ENCODE measurements at regions of chr13 and their contacts with region 1.

Region 1: GRCh38 chr13:21476893-21477472 is 17.9 kb upstream of the ZDHHC20 start:
- DNase-seq: peak; percentile 59 to 82 (median 65)
- ATAC-seq: peak; percentile 94
- H3K4me3 ChIP-seq: peak overlapping the region; percentile 50
- H3K4me3 Mint-ChIP-seq: peak overlapping the region; percentile 74 to 87 (median 82)
- H3K27ac ChIP-seq: peak overlapping the region; percentile 24
- H3K27ac Mint-ChIP-seq: peak overlapping the region in 8 of 9 donors; percentile 22 to 86 (median 58)
- H3K4me1 ChIP-seq: no peaks in the 10 kb centered on the region
- H3K4me1 Mint-ChIP-seq: peaks cover 7 to 17% (median 11%) of the 10 kb centered on the region in 7 donors
- H3K27me3 ChIP-seq: no peaks in the 10 kb centered on the region
- H3K27me3 Mint-ChIP-seq: peaks cover 0 to 5% (median 0%) of the 10 kb centered on the region in 5 donors

Region 2: DNA sequence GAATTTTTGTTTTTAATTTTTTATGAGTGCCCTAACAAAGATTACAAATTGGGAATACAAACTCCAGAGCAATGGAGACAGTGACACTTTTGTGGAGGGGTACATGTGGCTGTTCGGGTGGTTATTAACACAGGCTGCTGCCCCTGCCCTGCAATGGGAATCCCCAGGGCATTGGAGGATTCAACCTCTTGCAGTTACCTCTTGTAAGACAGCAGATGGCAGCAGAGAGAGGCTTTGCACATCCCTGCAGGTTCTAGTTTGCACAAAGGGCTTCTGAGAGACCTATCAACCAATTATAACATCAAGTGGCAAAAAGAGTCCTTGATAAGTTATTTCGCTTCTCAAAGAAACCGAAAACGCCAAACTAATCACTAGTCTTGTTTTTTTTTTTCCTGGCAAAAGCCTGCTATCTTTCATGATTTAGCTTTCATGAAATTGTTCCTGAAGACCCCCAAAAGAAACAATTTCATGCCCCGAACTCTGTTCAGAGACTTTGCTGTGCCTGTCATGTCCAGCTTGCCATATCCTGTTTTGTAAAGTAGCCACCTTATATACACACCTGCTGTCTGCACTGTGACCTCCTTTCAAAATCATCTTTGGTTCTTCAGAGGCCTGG is 1294.6 kb before region 1 on chr13:
- CTCF ChIA-PET with region 1: no interaction called
- POLR2A ChIA-PET with region 1: no interaction called
- intact Hi-C with region 1: loop called in 1 of 2 experiments (anchors 5 kb)
- DNase-seq: peak in 7 of 9 donors; percentile 43 to 77 (median 67)
- ATAC-seq: peak; percentile 99
- H3K4me3 ChIP-seq: no peak overlapping the region
- H3K4me3 Mint-ChIP-seq: no peak overlapping the region
- H3K27ac ChIP-seq: no peak overlapping the region
- H3K27ac Mint-ChIP-seq: no peak overlapping the region
- H3K4me1 ChIP-seq: no peaks in the 10 kb centered on the region
- H3K4me1 Mint-ChIP-seq: no peaks in the 10 kb centered on the region
- H3K27me3 ChIP-seq: peaks cover 0 to 10% of the 10 kb centered on the region in 2 donors
- H3K27me3 Mint-ChIP-seq: peaks cover 37 to 48% (median 43%) of the 10 kb centered on the region in 5 donors

Region 3: GRCh38 chr13:20828539-20829364 is 648.2 kb before region 1 on chr13:
- CTCF ChIA-PET with region 1: no interaction called
- POLR2A ChIA-PET with region 1: interaction called, 3 read pairs
- intact Hi-C with region 1: loop called in 1 of 2 experiments (anchors 10 kb)
- DNase-seq: peak in 7 of 9 donors; percentile 46 to 75 (median 67)
- ATAC-seq: peak; percentile 93
- H3K4me3 ChIP-seq: no peak overlapping the region
- H3K4me3 Mint-ChIP-seq: peak overlapping the region in 8 of 10 donors; percentile 51 to 81 (median 73)
- H3K27ac ChIP-seq: peak overlapping the region; percentile 14
- H3K27ac Mint-ChIP-seq: peak overlapping the region; percentile 35 to 87 (median 77)
- H3K4me1 ChIP-seq: no peaks in the 10 kb centered on the region
- H3K4me1 Mint-ChIP-seq: peaks cover 7 to 15% (median 10%) of the 10 kb centered on the region in 7 donors
- H3K27me3 ChIP-seq: no peaks in the 10 kb centered on the region
- H3K27me3 Mint-ChIP-seq: no peaks in the 10 kb centered on the region

Region 4: GRCh38 chr13:21106089-21106488 is 370.9 kb before region 1 on chr13:
- CTCF ChIA-PET with region 1: interaction called, 8 read pairs
- POLR2A ChIA-PET with region 1: interaction called, 3 read pairs
- intact Hi-C with region 1: loop called (anchors 1 kb)
- DNase-seq: no peak
- ATAC-seq: no peak
- H3K4me3 ChIP-seq: no peak overlapping the region
- H3K4me3 Mint-ChIP-seq: no peak overlapping the region
- H3K27ac ChIP-seq: no peak overlapping the region
- H3K27ac Mint-ChIP-seq: no peak overlapping the region
- H3K4me1 ChIP-seq: no peaks in the 10 kb centered on the region
- H3K4me1 Mint-ChIP-seq: peaks cover 0 to 2% (median 0%) of the 10 kb centered on the region in 7 donors
- H3K27me3 ChIP-seq: no peaks in the 10 kb centered on the region
- H3K27me3 Mint-ChIP-seq: peaks cover 0 to 5% (median 0%) of the 10 kb centered on the region in 5 donors

Region 5: GRCh38 chr13:21458813-21459701 is 17.9 kb before region 1 on chr13 and contains the start of gene ZDHHC20:
- CTCF ChIA-PET with region 1: interaction called, 10 read pairs
- POLR2A ChIA-PET with region 1: interaction called, 5 read pairs
- intact Hi-C with region 1: loop called (anchors 1 kb)
- DNase-seq: peak; percentile 75 to 99 (median 88)
- ATAC-seq: peak; percentile 98
- H3K4me3 ChIP-seq: peak within 1 kb of the TSS; percentile 90
- H3K4me3 Mint-ChIP-seq: peak within 1 kb of the TSS; percentile 91 to 97 (median 94)
- H3K27ac ChIP-seq: peak within 1 kb of the TSS; percentile 97
- H3K27ac Mint-ChIP-seq: peak within 1 kb of the TSS; percentile 74 to 98 (median 94)
- H3K4me1 ChIP-seq: peaks cover 9 to 19% of the 10 kb centered on the region in 2 donors
- H3K4me1 Mint-ChIP-seq: peaks cover 27 to 55% (median 42%) of the 10 kb centered on the region in 7 donors
- H3K27me3 ChIP-seq: no peaks in the 10 kb centered on the region
- H3K27me3 Mint-ChIP-seq: peaks cover 0 to 7% (median 0%) of the 10 kb centered on the region in 5 donors
- total RNA-seq, gene ZDHHC20: 60.8 to 89.9 (median 71.7) TPM